HCT116 (cell line): ENCODE measurements at regions of chr18 and their contacts with region 1.

Region 1: DNA sequence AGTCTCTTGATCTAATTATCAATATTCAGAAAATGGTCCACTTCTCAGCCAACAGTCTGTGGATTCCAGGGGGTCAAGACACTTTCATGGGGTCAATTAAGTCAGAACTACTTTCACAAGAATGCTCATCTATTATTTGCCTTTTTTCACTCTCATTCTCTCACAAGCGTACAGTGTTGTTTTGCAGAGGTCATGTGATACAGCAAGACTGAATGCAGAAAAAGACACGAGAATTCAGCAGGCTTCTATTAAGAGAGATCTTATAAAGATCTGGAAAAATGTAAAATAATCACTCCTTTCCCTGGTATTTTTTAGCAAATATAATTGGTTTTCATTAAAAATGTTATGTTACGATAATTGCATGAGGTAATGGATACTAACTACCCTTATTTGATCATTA is 8.7 kb downstream of the RPRD1A start:
- DNase-seq: no peak
- ATAC-seq: no peak
- H3K4me3 ChIP-seq: no peak overlapping the region
- H3K27ac ChIP-seq: no peak overlapping the region
- H3K4me1 ChIP-seq: no peaks in the 10 kb centered on the region
- H3K27me3 ChIP-seq: no peaks in the 10 kb centered on the region
- CTCF ChIP-seq: no peak
- POLR2A ChIP-seq: no peak
- RAD21 ChIP-seq: no peak

Region 2: GRCh38 chr18:36035253-36035652 is 23.4 kb before region 1 on chr18:
- CTCF ChIA-PET with region 1: no interaction called
- POLR2A ChIA-PET with region 1: no interaction called
- RAD21 ChIA-PET with region 1: no interaction called
- intact Hi-C with region 1: loop called (anchors 1 kb)
- DNase-seq: no peak
- ATAC-seq: no peak
- H3K4me3 ChIP-seq: no peak overlapping the region
- H3K27ac ChIP-seq: no peak overlapping the region
- H3K4me1 ChIP-seq: no peaks in the 10 kb centered on the region
- H3K27me3 ChIP-seq: no peaks in the 10 kb centered on the region
- CTCF ChIP-seq: no peak
- POLR2A ChIP-seq: no peak
- RAD21 ChIP-seq: no peak